ENCODE measurements at regions of chr1 and their contacts with region 1.

Region 1: GRCh38 chr1:158998781-158999161 is 10.9 kb upstream of the IFI16 start:
- DNase-seq: peak; percentile 52
- H3K4me3 Mint-ChIP-seq: peak overlapping the region; percentile 49
- H3K27ac Mint-ChIP-seq: peak overlapping the region; percentile 73
- H3K4me1 Mint-ChIP-seq: peaks cover 41% of the 10 kb centered on the region
- H3K27me3 Mint-ChIP-seq: no peaks in the 10 kb centered on the region

Region 2: DNA sequence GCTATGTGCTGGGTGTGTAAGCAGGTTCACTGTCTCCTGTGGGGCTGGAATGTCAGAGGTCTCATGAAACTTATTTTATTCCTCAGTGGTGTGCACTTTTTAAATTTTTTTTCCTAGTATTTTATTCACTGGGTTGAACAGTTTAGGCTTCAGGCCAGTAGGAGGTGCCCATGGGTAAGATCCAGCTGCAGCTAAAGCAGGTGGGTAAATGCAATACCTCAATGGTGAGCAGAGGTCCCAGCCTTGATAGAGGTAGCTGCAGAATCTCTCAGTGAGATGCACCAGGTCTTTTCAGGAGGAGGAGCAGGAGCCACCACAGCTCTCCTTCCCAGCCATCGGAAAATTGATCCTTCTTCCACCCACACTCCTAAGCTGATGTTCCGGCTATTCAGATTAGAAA is 205.2 kb before region 1 on chr1:
- CTCF ChIA-PET with region 1: interaction called, 19 read pairs
- POLR2A ChIA-PET with region 1: interaction called, 3 read pairs
- DNase-seq: peak; percentile 46
- H3K4me3 Mint-ChIP-seq: no peak overlapping the region
- H3K27ac Mint-ChIP-seq: no peak overlapping the region
- H3K4me1 Mint-ChIP-seq: no peaks in the 10 kb centered on the region
- H3K27me3 Mint-ChIP-seq: peaks cover 2% of the 10 kb centered on the region

Region 3: DNA sequence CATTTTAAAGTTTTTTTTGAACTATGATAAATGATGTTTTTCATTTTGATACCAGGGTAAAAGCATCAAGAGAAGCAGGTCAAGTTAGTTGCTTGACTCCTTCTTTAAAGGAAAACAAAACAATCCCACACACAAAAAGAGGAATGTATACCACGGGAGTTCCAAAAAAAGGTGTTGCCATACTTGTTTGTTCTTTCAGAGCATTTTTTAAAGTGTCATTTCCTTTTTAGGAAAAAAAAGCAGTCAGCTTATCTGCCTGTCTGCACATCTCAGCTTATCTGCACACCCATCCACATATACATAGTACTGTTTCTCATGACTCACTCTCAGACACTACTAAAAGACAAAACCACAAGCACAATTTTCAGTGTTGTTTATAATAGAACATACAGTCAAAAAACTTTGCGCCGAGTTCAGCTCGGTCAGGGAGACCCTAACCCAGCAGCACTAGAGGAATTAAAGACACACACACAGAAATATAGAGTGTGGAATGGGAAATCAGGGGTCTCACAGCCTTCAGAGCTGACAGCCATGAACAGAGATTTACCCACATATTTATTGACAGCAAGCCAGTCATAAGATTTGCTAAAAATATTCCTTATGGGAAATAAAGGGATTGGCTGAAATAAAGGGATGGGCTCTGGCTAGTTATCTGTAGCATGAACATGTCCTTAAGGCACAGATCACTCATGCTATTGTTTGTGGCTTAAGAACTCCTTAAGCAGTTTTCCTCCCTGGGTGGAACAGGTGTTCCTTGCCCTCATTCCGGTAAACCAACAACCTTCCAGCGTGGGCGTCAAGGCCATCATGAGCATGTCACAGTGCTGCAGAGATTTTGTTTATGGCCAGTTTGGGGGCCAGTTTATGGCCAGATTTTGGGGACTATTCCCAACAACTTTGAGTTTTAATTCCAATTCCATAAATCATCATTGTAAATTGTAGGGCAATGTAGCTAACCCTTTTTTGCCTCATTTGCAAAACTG is 179.0 kb before region 1 on chr1:
- CTCF ChIA-PET with region 1: interaction called, 11 read pairs
- POLR2A ChIA-PET with region 1: interaction called, 5 read pairs
- DNase-seq: peak; percentile 33
- H3K4me3 Mint-ChIP-seq: peak overlapping the region; percentile 56
- H3K27ac Mint-ChIP-seq: peak overlapping the region; percentile 89
- H3K4me1 Mint-ChIP-seq: peaks cover 29% of the 10 kb centered on the region
- H3K27me3 Mint-ChIP-seq: no peaks in the 10 kb centered on the region

Region 4: GRCh38 chr1:158951956-158952355 is 46.8 kb before region 1 on chr1:
- CTCF ChIA-PET with region 1: no interaction called
- POLR2A ChIA-PET with region 1: no interaction called
- DNase-seq: no peak
- H3K4me3 Mint-ChIP-seq: no peak overlapping the region
- H3K27ac Mint-ChIP-seq: no peak overlapping the region
- H3K4me1 Mint-ChIP-seq: peaks cover 2% of the 10 kb centered on the region
- H3K27me3 Mint-ChIP-seq: no peaks in the 10 kb centered on the region

Measured in activated CD4-positive, alpha-beta memory T cell treated with anti-CD3 and anti-CD28 coated beads, Interleukin-2, amount 10 ng/mL, durations not matched to agents 7 days and 5 days (primary cell).